SK-N-SH (cell line): ENCODE measurements at regions of chr12 and their contacts with region 1.

Region 1: GRCh38 chr12:119036878-119037825 is 55.8 kb downstream of the SRRM4 start:
- DNase-seq: peak; percentile 60
- H3K4me3 ChIP-seq: no peak overlapping the region; a peak in 1 of 4 replicates
- H3K27ac ChIP-seq: no peak overlapping the region
- H3K4me1 ChIP-seq: peaks cover 0 to 3% of the 10 kb centered on the region in 2 experiments; a peak in 1 of 4 replicates
- H3K27me3 ChIP-seq: no peaks in the 10 kb centered on the region
- CTCF ChIP-seq: peak; percentile 44
- EP300 ChIP-seq: no peak
- RAD21 ChIP-seq: peak; percentile 68

Region 2: GRCh38 chr12:118979763-118980406 is 57.3 kb before region 1 on chr12:
- CTCF ChIA-PET with region 1: interaction called, 13 read pairs
- POLR2A ChIA-PET with region 1: no interaction called
- DNase-seq: peak; percentile 73
- H3K4me3 ChIP-seq: peak overlapping the region; percentile 54 to 55; a peak in 2 of 4 replicates
- H3K27ac ChIP-seq: peak overlapping the region in 1 of 2 experiments; percentile 89; a peak in 2 of 4 replicates
- H3K4me1 ChIP-seq: peaks cover 0 to 8% of the 10 kb centered on the region in 2 experiments; a peak in 1 of 4 replicates
- H3K27me3 ChIP-seq: no peaks in the 10 kb centered on the region
- CTCF ChIP-seq: peak; percentile 64
- EP300 ChIP-seq: no peak
- RAD21 ChIP-seq: peak; percentile 87

Region 3: GRCh38 chr12:119008691-119009221 is 28.4 kb before region 1 on chr12:
- CTCF ChIA-PET with region 1: interaction called, 12 read pairs
- POLR2A ChIA-PET with region 1: no interaction called
- DNase-seq: peak; percentile 74
- H3K4me3 ChIP-seq: peak overlapping the region in 1 of 2 experiments; percentile 24; a peak in 1 of 4 replicates
- H3K27ac ChIP-seq: peak overlapping the region in 1 of 2 experiments; percentile 92; a peak in 2 of 4 replicates
- H3K4me1 ChIP-seq: peaks cover 0 to 53% of the 10 kb centered on the region in 2 experiments; a peak in 2 of 4 replicates
- H3K27me3 ChIP-seq: no peaks in the 10 kb centered on the region
- CTCF ChIP-seq: no peak
- EP300 ChIP-seq: peak in 1 of 2 experiments; percentile 68; a peak in 1 of 4 replicates
- RAD21 ChIP-seq: no peak

Region 4: DNA sequence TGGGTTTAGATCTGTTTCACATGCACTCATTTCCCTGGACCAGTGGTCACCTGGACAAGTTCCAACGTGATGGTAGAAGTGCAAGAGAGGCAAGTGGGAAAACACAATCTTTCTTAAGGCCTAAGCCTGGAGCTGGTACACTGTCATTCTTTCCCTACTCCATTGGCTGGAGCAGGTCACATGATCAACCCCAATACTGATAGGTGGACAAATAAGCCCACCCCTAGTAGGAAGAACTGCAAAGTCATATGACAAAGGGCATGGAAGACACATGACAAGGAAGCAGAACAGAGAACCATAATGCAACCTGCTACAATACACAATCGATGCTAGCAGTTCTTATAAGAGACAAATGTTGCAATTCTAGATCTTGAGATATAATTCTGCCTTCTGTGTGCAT is 10.5 kb after region 1 on chr12:
- CTCF ChIA-PET with region 1: interaction called, 24 read pairs
- POLR2A ChIA-PET with region 1: no interaction called
- DNase-seq: no peak
- H3K4me3 ChIP-seq: no peak overlapping the region
- H3K27ac ChIP-seq: no peak overlapping the region
- H3K4me1 ChIP-seq: no peaks in the 10 kb centered on the region
- H3K27me3 ChIP-seq: no peaks in the 10 kb centered on the region
- CTCF ChIP-seq: no peak
- EP300 ChIP-seq: no peak
- RAD21 ChIP-seq: no peak

Region 5: GRCh38 chr12:119060847-119061796 is 24.0 kb after region 1 on chr12:
- CTCF ChIA-PET with region 1: interaction called, 10 read pairs
- POLR2A ChIA-PET with region 1: no interaction called
- DNase-seq: no peak
- H3K4me3 ChIP-seq: no peak overlapping the region
- H3K27ac ChIP-seq: no peak overlapping the region
- H3K4me1 ChIP-seq: peaks cover 0 to 5% of the 10 kb centered on the region in 2 experiments; a peak in 2 of 4 replicates
- H3K27me3 ChIP-seq: no peaks in the 10 kb centered on the region
- CTCF ChIP-seq: no peak
- EP300 ChIP-seq: no peak
- RAD21 ChIP-seq: no peak

Region 6: DNA sequence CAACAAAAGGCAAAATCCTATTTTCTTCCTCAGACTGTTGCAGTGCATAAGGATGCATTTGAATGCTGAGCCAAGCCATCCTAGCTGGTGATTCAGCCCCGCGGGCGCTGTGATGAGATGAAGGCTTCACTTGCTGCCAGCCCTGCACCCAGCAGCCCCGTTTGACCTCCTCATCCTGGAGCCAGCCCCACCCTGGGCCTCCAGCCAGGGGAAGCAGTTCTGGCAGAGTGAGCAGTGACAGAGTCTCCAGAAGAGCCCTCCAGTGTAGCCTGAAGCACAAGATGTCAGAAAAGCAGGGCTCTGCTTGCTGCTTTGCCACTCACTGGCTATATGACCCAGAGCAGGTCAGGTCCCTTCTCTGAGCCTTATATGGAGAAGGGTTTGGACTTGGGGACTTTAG is 45.3 kb after region 1 on chr12:
- CTCF ChIA-PET with region 1: interaction called, 11 read pairs
- POLR2A ChIA-PET with region 1: no interaction called
- DNase-seq: peak; percentile 62
- H3K4me3 ChIP-seq: no peak overlapping the region
- H3K27ac ChIP-seq: peak overlapping the region in 1 of 2 experiments; percentile 88; a peak in 2 of 4 replicates
- H3K4me1 ChIP-seq: peaks cover 0 to 50% of the 10 kb centered on the region in 2 experiments; a peak in 2 of 4 replicates
- H3K27me3 ChIP-seq: no peaks in the 10 kb centered on the region
- CTCF ChIP-seq: no peak
- EP300 ChIP-seq: peak in 1 of 2 experiments; percentile 80; a peak in 2 of 4 replicates
- RAD21 ChIP-seq: peak; percentile 8; the same call in 1 of the 2 replicates